Heart right ventricle (tissue), 16 donors: ENCODE measurements at regions of chr3 and their contacts with region 1.

Region 1: DNA sequence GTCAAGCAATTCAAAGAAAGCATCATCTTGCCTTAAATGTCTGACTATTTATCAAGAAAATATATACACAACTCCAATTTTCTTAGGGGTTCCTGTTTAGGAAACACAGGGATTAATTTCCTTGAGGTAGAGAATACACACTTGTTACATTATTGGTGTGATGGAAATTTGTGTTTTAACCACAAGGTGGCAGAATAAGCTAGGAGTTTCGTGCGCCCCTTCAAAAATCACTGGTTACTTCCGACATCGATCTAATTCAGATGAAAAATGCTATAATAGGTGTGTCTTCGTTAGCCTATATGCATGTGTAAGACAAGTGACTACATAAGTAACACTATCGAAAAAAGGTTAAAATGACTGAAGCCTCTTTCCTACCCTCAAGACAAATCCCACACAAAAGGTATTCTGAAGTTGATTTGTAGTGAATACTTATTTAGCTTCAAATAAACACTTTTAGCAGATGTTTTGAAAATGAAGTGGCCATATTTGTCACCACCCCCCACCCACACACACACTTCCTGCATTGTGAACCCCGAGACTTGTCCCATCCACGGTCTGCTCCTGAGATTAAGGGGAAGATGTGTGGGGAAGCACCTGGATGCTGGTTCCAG is 246.5 kb downstream of the ROBO1 start:
- DNase-seq: no peak
- ATAC-seq: no peak
- H3K4me3 ChIP-seq: no peak overlapping the region
- H3K27ac ChIP-seq: no peak overlapping the region
- H3K4me1 ChIP-seq: no peaks in the 10 kb centered on the region
- H3K27me3 ChIP-seq: peaks cover 0 to 10% (median 0%) of the 10 kb centered on the region in 7 donors
- CTCF ChIP-seq: peak; percentile 9 to 62 (median 57)

Region 2: DNA sequence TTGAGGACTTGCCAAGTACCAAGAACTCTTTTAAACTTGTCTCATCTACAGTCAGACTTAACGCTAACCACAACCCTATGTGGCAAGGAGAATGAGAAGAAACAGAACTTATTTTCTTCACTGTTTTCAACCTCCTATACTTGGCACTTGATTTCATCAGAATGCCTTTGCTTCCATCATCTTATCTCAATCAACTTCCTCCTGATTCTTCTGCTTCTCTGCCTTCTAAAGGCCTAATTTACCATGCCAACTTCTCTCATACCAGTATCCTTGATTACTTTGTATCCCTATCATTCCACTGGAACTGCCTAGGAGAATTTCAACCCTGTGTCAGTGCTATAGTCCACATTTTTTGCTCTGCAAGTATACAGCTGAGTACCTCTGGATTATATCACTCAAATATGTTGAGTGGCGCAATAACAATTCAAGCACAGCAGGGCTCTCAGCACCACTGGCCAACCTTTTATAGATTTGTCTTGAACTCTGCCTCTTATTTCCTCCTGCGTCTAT is 167.1 kb before region 1 on chr3:
- intact Hi-C with region 1: no loop called
- DNase-seq: no peak
- ATAC-seq: peak in 1 of 8 donors; percentile 39
- H3K4me3 ChIP-seq: no peak overlapping the region
- H3K27ac ChIP-seq: no peak overlapping the region
- H3K4me1 ChIP-seq: no peaks in the 10 kb centered on the region
- H3K27me3 ChIP-seq: no peaks in the 10 kb centered on the region
- CTCF ChIP-seq: no peak

Region 3: DNA sequence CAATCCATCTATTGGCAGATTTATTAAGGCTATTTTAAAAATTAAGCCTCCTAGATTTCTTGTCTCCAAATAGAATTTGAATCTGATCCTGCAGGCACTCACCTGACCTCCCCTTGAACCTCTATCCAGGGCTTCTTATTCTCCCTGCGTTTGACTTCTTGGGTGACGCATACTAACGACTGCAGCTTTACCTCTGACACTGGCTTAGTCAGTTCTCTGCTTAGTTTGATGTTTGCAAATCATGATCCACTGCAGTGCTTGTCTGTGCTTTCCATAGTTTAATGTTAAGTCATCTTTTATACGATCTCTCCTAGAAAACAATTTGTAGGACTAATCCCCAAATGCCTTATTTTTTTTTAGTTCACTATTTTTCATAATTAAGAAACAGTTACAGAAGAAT is 13.4 kb after region 1 on chr3:
- intact Hi-C with region 1: loop called in 1 of 10 experiments (anchors 1 kb)
- DNase-seq: no peak
- ATAC-seq: no peak
- H3K4me3 ChIP-seq: no peak overlapping the region
- H3K27ac ChIP-seq: no peak overlapping the region
- H3K4me1 ChIP-seq: no peaks in the 10 kb centered on the region
- H3K27me3 ChIP-seq: no peaks in the 10 kb centered on the region
- CTCF ChIP-seq: no peak

Region 4: DNA sequence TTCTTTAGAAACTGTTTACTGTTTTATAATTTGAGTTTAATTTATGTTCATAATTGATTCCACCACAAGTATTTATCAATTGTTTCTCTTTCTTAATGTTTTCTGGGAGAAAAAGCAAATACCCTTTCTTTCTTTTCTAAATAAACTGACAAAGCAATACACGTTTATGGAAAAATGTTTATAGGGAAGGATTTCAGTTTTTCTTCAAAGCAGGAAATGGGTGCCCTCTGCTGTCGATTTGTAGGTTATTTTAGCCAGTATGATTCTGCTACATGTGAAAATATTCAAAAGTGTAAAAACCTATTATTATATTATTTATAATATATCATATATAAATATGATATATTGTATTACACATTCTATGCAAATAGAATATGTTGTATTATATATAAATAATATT is 1167.5 kb after region 1 on chr3:
- intact Hi-C with region 1: loop called in 7 of 10 experiments (anchors 5 to 10 kb)
- DNase-seq: no peak
- ATAC-seq: no peak
- H3K4me3 ChIP-seq: no peak overlapping the region
- H3K27ac ChIP-seq: no peak overlapping the region
- H3K4me1 ChIP-seq: no peaks in the 10 kb centered on the region
- H3K27me3 ChIP-seq: no peaks in the 10 kb centered on the region
- CTCF ChIP-seq: peak in 5 of 9 donors; percentile 15 to 46 (median 17)

Region 5: DNA sequence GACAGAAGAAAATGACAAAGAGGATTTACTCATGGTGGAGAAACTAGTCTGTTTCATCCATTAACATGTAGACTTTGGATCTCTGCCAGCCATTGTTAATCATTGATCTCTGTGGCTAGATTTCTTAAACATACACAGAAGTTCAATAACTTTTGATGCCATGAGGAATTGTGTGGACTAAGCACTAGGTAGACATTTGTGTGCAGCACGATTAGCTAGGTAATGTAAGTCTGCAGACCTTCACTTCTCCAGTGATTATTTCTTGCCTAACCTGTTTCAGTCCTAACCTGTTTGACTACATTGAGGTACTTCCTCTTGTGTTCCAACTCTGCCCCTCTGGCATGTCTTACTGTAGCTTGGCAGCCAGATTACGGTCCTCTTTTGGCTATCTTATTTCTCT is 1174.9 kb after region 1 on chr3:
- intact Hi-C with region 1: loop called in 2 of 10 experiments (anchors 10 kb)
- DNase-seq: no peak
- ATAC-seq: no peak
- H3K4me3 ChIP-seq: no peak overlapping the region
- H3K27ac ChIP-seq: no peak overlapping the region
- H3K4me1 ChIP-seq: no peaks in the 10 kb centered on the region
- H3K27me3 ChIP-seq: no peaks in the 10 kb centered on the region
- CTCF ChIP-seq: no peak

Region 6: DNA sequence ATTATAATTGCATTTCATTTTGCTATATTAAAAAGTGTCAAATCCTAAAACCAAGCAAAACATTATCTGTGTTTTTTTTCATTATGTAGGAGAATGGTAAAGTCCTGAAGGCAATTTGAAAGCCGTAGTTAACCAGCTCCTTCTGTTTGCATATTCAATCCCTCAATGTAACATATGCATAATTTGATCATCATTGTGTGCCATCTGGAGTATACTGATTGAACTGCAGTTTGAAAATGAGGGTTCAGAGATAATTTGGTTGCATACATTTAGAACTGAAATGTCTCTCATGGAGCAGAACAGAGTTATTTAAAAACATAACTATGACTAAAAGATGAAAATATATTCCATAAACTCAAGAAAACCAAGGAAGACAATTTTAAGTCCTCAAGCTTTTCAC is 1721.5 kb after region 1 on chr3:
- intact Hi-C with region 1: loop called in 1 of 10 experiments (anchors 5 kb)
- DNase-seq: no peak
- ATAC-seq: no peak
- H3K4me3 ChIP-seq: no peak overlapping the region
- H3K27ac ChIP-seq: no peak overlapping the region
- H3K4me1 ChIP-seq: no peaks in the 10 kb centered on the region
- H3K27me3 ChIP-seq: no peaks in the 10 kb centered on the region
- CTCF ChIP-seq: peak in 4 of 9 donors; percentile 8 to 42 (median 22)